Caco-2 (cell line): ENCODE measurements at regions of chr19 and their contacts with region 1.

Region 1: GRCh38 chr19:16025108-16026101 is 50.9 kb upstream of the TPM4 start:
- DNase-seq: peak; percentile 68 to 70
- H3K4me3 ChIP-seq: no peak overlapping the region
- H3K4me3 Mint-ChIP-seq: no peak overlapping the region
- H3K27ac Mint-ChIP-seq: no peak overlapping the region
- H3K4me1 ChIP-seq: no peaks in the 10 kb centered on the region
- H3K4me1 Mint-ChIP-seq: no peaks in the 10 kb centered on the region
- H3K27me3 ChIP-seq: no peaks in the 10 kb centered on the region
- H3K27me3 Mint-ChIP-seq: no peaks in the 10 kb centered on the region
- CTCF ChIP-seq: peak; percentile 67 to 76

Region 2: GRCh38 chr19:16134510-16134909 is 109.1 kb after region 1 on chr19:
- CTCF ChIA-PET with region 1: no interaction called
- POLR2A ChIA-PET with region 1: no interaction called
- intact Hi-C with region 1: no loop called
- DNase-seq: no peak
- H3K4me3 ChIP-seq: no peak overlapping the region
- H3K4me3 Mint-ChIP-seq: no peak overlapping the region
- H3K27ac Mint-ChIP-seq: no peak overlapping the region
- H3K4me1 ChIP-seq: no peaks in the 10 kb centered on the region
- H3K4me1 Mint-ChIP-seq: no peaks in the 10 kb centered on the region
- H3K27me3 ChIP-seq: no peaks in the 10 kb centered on the region
- H3K27me3 Mint-ChIP-seq: no peaks in the 10 kb centered on the region
- CTCF ChIP-seq: no peak

Region 3: DNA sequence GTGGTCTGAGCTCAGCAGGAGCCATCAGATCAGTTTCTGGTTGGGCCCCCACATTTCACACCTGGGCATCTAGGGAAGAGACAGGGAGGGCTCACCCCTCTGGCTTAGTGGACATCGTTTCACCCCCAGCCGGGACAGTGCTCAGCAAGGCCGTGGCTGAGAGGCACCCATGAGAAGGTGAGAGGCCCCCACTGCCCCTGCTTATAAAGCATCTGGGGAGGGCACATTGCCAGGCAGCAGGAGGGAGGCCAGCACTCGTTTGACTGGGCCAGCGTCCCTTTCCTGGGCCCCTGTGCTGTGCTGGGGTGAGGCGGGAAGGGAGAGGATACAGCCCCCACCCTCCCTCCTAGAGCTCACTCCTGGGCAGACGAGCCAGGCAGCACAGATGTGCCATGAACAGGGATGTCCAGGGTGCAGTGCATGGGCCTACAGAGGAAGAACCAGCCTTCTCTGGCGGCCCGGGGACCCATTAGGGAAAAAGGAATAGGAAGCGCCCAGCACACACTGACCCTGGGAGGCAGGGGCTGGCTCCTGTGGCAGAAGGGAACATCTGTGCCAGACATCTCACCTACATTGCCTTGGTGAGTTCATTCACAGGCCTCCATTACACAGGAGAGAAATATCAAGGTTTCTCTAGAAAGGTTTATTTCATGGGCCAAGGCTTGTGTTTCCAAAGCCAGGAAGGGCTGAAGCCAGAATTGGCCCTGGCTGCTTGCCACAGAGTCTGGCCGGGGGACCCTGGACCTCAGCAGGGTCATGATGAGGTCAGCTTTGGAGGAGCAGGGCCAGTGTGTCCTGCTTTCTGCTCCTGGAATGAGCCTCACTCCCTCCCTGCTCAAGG is 180.0 kb after region 1 on chr19:
- CTCF ChIA-PET with region 1: no interaction called
- POLR2A ChIA-PET with region 1: interaction called, 14 read pairs
- intact Hi-C with region 1: no loop called
- DNase-seq: no peak
- H3K4me3 ChIP-seq: no peak overlapping the region
- H3K4me3 Mint-ChIP-seq: no peak overlapping the region
- H3K27ac Mint-ChIP-seq: no peak overlapping the region
- H3K4me1 ChIP-seq: no peaks in the 10 kb centered on the region
- H3K4me1 Mint-ChIP-seq: peaks cover under 1% of the 10 kb centered on the region
- H3K27me3 ChIP-seq: no peaks in the 10 kb centered on the region
- H3K27me3 Mint-ChIP-seq: no peaks in the 10 kb centered on the region
- CTCF ChIP-seq: no peak